AG04449 (cell line): ENCODE measurements at regions of chr14 and their contacts with region 1.

Region 1: DNA sequence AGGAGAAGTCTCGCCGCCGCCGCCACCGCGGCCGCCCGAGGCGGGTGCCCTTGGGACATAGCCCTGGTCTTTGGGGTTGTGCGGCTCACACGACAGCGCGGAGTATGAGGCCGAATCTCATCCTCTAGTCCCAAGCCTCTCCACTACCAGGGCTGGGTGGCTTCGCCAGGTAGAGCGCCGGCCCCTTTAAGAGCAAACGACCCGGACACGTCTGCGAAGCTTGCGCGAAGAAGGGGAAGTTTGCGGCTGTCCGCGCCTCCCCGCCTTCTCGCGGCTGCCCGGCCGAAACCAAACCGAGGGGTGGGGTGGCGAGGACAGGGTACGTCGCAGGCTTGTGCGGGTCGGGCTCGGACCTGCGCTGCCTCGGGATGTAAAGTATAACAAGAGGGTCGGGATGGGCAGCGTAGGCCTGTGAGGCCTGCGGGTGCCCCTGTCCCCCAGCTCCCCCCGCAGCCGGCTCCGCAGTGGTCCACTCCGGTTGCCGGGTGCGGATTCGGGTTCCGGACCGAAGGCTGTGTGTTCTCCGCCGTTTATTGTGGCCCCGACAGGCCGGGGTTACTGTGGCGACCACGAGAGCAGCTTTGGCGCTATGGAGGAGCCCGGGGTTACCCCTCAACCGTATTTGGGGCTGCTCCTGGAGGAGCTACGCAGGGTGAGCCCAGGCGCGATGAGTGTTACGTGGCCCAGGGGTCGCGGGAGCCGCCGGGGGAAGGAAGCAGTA is 33.3 kb downstream of the MIA2 start:
- DNase-seq: no peak
- H3K4me3 ChIP-seq: peak overlapping the region; percentile 90
- CTCF ChIP-seq: no peak

Region 2: DNA sequence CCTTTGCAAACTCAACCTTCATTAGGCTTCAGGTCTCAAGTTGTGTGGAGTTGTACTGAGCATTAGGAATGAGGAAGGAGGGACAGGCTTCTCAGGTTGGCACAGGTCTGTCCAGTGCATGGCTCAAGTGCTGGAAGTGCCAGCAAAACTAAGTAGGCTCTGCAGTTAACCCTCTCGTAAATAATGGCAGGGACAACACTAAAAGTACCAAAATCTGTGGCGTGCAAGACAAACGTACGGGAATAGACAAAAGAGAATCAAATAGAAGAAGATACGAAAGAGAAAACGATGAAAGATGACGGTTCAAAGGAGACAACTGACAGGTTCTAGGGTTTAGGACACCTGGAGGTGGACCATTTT is 97.5 kb before region 1 on chr14:
- CTCF ChIA-PET with region 1: no interaction called
- POLR2A ChIA-PET with region 1: interaction called, 15 read pairs
- DNase-seq: no peak
- H3K4me3 ChIP-seq: peak overlapping the region; percentile 99
- CTCF ChIP-seq: no peak

Region 3: GRCh38 chr14:39499514-39499913 is 232.5 kb after region 1 on chr14:
- CTCF ChIA-PET with region 1: no interaction called
- POLR2A ChIA-PET with region 1: no interaction called
- DNase-seq: no peak
- H3K4me3 ChIP-seq: no peak overlapping the region
- CTCF ChIP-seq: no peak